BJ (cell line): ENCODE measurements at regions of chr17 and their contacts with region 1.

Region 1: GRCh38 chr17:58417300-58418092 is at the start of gene RNF43:
- DNase-seq: peak; percentile 41
- H3K4me3 ChIP-seq: peak within 1 kb of the TSS; percentile 31; the same call in 1 of the 2 replicates
- H3K27me3 ChIP-seq: peaks cover 2% of the 10 kb centered on the region; the same call in 1 of the 2 replicates
- CTCF ChIP-seq: peak; percentile 93
- polyA plus RNA-seq, gene RNF43: not detected in 2 replicates

Region 2: GRCh38 chr17:58242171-58242784 is 175.2 kb before region 1 on chr17:
- CTCF ChIA-PET with region 1: no interaction called
- POLR2A ChIA-PET with region 1: no interaction called
- DNase-seq: no peak
- H3K4me3 ChIP-seq: no peak overlapping the region
- H3K27me3 ChIP-seq: peaks cover 16% of the 10 kb centered on the region
- CTCF ChIP-seq: no peak

Region 3: DNA sequence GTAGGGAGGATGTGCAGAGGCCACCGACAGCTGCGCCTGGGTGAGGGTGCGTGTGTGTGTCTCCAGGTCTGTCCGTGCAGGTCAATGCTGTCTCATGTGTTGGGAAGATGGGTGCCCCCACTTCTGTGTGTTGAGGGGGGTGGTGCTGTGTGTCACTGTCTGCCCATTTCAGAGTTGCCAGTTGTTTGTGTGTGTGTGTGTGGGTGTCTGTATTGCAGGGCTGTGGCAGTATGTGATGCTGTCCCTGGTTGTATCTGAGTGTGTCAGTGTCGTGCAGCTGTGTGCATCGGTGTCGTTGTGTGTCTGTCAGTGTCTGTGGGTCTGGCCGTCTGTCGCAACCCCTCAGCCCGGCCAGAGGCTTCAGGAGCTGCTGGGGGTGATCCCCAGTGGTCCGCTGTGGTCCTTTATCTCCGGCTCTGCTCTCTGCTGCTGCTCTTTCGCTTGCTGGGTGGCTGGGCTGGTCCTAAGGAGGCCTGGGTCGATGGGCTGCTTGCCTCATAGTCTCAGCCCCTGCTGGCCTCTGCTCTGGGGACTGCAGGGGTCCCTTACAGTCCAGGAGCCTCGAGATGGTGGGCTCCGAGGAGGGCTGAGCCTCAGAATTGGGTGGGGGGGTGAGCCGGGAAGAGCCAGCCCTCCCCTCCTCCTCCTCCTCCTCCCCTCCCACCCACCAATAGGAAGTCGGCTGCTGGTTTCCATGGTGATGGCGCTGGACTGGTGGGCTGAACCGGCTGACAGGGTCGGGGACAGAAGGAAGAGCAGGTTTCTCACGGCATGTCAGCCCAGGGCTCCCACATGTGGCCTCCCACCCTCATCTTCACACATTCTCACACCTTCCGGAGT is 89.1 kb before region 1 on chr17 and contains the start of gene TSPOAP1:
- CTCF ChIA-PET with region 1: interaction called, 11 read pairs
- POLR2A ChIA-PET with region 1: no interaction called
- DNase-seq: no peak
- H3K4me3 ChIP-seq: no peak within 1 kb of the TSS
- H3K27me3 ChIP-seq: no peaks in the 10 kb centered on the region
- CTCF ChIP-seq: no peak
- polyA plus RNA-seq, gene TSPOAP1: 3.9 and 5.6 TPM in 2 replicates